ENCODE measurements at regions of chr16 and their contacts with region 1.

Region 1: GRCh38 chr16:17467923-17468540 is 2.7 kb downstream of the XYLT1 start:
- DNase-seq: peak; percentile 68
- H3K4me3 Mint-ChIP-seq: peak overlapping the region; percentile 89
- H3K27ac Mint-ChIP-seq: no peak overlapping the region
- H3K4me1 Mint-ChIP-seq: peaks cover 59% of the 10 kb centered on the region
- H3K27me3 Mint-ChIP-seq: peaks cover 21% of the 10 kb centered on the region

Region 2: GRCh38 chr16:17230932-17231581 is 237.0 kb before region 1 on chr16:
- CTCF ChIA-PET with region 1: interaction called, 12 read pairs
- DNase-seq: peak; percentile 30
- H3K4me3 Mint-ChIP-seq: no peak overlapping the region
- H3K27ac Mint-ChIP-seq: peak overlapping the region; percentile 16
- H3K4me1 Mint-ChIP-seq: peaks cover 2% of the 10 kb centered on the region
- H3K27me3 Mint-ChIP-seq: no peaks in the 10 kb centered on the region

Region 3: GRCh38 chr16:17313085-17313611 is 154.9 kb before region 1 on chr16:
- CTCF ChIA-PET with region 1: no interaction called
- DNase-seq: no peak
- H3K4me3 Mint-ChIP-seq: no peak overlapping the region
- H3K27ac Mint-ChIP-seq: no peak overlapping the region
- H3K4me1 Mint-ChIP-seq: peaks cover 47% of the 10 kb centered on the region
- H3K27me3 Mint-ChIP-seq: no peaks in the 10 kb centered on the region

Region 4: GRCh38 chr16:17345043-17345442 is 123.0 kb before region 1 on chr16:
- CTCF ChIA-PET with region 1: interaction called, 24 read pairs
- DNase-seq: no peak
- H3K4me3 Mint-ChIP-seq: no peak overlapping the region
- H3K27ac Mint-ChIP-seq: peak overlapping the region; percentile 89
- H3K4me1 Mint-ChIP-seq: peaks cover 90% of the 10 kb centered on the region
- H3K27me3 Mint-ChIP-seq: no peaks in the 10 kb centered on the region

Region 5: DNA sequence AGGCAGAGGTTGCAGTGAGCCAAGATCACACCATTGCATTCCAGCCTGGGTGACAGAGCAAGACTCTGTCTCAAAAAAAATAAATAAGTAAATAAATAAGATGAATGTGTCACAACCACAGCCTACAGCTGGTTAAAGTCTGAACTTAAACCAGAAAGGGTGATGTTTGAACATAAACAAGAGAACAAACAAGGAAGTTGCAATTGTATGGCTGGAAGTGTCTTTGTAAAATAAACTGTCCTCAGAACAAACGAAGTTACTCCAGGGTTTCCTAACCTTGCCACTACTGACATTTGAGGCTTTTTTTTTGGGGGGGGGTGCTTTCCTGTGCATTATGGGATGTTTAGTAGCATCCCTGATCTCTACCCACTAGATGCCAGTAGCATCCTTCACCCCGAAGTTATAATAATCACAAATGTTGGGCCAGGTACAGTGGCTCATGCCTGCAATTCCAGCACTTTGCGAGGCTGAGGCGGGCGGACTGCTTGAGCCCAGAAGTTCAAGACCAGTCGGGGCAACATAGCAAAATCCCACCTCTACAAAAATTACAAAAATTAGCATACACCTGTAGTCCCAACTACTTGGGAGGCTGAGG is 116.5 kb before region 1 on chr16:
- CTCF ChIA-PET with region 1: interaction called, 24 read pairs
- DNase-seq: no peak
- H3K4me3 Mint-ChIP-seq: no peak overlapping the region
- H3K27ac Mint-ChIP-seq: no peak overlapping the region
- H3K4me1 Mint-ChIP-seq: peaks cover 68% of the 10 kb centered on the region
- H3K27me3 Mint-ChIP-seq: no peaks in the 10 kb centered on the region

Region 6: GRCh38 chr16:17416461-17417311 is 51.3 kb before region 1 on chr16:
- CTCF ChIA-PET with region 1: interaction called, 24 read pairs
- DNase-seq: peak; percentile 60
- H3K4me3 Mint-ChIP-seq: peak overlapping the region; percentile 51
- H3K27ac Mint-ChIP-seq: peak overlapping the region; percentile 88
- H3K4me1 Mint-ChIP-seq: peaks cover 47% of the 10 kb centered on the region
- H3K27me3 Mint-ChIP-seq: no peaks in the 10 kb centered on the region

Region 7: DNA sequence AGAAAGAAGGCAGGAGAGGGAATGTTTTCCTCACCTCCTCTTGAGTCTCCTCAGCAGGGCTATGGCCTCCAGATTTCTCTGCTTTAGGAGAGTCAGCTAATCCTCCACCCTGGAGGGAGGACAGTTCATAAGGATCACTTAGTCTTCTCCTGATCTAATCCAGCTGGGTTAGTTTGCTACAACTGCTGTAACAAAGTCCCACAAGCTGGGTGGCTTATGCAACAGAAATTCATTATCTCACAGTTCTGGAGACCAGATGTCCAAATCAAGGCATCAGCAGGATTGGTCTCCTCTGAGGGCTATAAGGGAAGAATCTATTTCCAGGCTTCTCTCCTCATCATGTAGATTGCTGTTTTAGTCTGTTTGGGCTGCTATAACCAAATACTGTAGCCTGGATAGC is 43.3 kb after region 1 on chr16:
- CTCF ChIA-PET with region 1: no interaction called
- DNase-seq: no peak
- H3K4me3 Mint-ChIP-seq: no peak overlapping the region
- H3K27ac Mint-ChIP-seq: no peak overlapping the region
- H3K4me1 Mint-ChIP-seq: no peaks in the 10 kb centered on the region
- H3K27me3 Mint-ChIP-seq: peaks cover 28% of the 10 kb centered on the region

Measured in activated naive CD4-positive, alpha-beta T cell treated with anti-CD3 and anti-CD28 coated beads, Interleukin-2, amount 10 ng/mL, durations not matched to agents 7 days and 5 days (primary cell).